ENCODE measurements at regions of chr22 and their contacts with region 1.

Region 1: DNA sequence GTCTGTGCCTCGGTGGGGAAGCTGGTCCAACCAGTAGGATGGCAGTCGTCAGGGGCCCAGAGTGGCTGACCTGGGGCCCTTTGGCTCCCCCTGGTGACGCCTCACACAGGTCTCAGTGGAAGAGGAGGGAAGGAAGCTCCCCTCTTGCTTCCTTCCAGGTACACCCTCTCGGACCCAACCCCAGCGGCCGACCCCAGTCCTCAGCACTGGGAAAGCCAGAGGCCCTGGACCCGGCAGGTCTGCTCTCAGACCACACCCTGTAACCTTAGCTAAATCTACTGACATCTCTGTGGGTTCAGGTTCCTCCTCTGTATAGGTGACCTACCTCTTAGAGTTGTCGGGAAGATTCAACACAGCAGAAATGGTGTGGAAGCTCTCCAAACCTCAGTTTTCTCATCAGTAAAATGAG is 3.4 kb upstream of the SCUBE1 start:
- DNase-seq: peak; percentile 56 to 87
- H3K4me3 ChIP-seq: no peak overlapping the region
- H3K27ac ChIP-seq: no peak overlapping the region
- H3K4me1 ChIP-seq: peaks cover 0 to 2% (median under 1%) of the 10 kb centered on the region in 4 experiments; a peak in 2 of 7 replicates
- H3K27me3 ChIP-seq: peaks cover 18 to 37% (median 33%) of the 10 kb centered on the region in 4 experiments
- CTCF ChIP-seq: peak; percentile 80 to 88 (median 87)
- EP300 ChIP-seq: no peak
- POLR2A ChIP-seq: no peak
- RAD21 ChIP-seq: peak; percentile 74 to 85

Region 2: DNA sequence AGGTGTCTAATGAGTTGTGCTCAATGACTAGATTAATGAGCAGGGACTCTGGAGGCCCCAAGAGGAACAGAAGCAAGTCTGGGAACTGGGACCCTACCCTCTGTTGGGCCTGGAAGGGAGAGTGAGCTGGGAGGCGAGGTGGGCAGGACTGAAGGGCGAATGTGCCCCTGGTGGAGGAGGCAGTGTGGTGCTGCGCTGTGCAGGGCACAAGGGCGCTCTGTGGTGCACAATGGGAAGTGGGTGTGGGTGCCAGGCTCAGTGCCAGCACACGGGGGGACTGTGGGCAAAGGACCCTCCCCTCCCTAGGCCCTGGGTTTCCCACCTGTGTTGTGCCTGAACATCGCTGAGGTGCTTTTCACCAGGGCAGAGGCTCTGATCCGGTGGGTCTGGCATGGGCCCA is 102.1 kb before region 1 on chr22:
- CTCF ChIA-PET with region 1: interaction called, 11 read pairs
- POLR2A ChIA-PET with region 1: no interaction called
- DNase-seq: no peak
- H3K4me3 ChIP-seq: no peak overlapping the region
- H3K27ac ChIP-seq: no peak overlapping the region
- H3K4me1 ChIP-seq: no peaks in the 10 kb centered on the region; a peak in 1 of 7 replicates
- H3K27me3 ChIP-seq: no peaks in the 10 kb centered on the region
- CTCF ChIP-seq: peak in 2 of 3 experiments; percentile 30 to 53; a peak in 2 of 4 replicates
- EP300 ChIP-seq: no peak
- POLR2A ChIP-seq: no peak
- RAD21 ChIP-seq: no peak

Region 3: GRCh38 chr22:43273902-43274484 is 72.5 kb before region 1 on chr22:
- CTCF ChIA-PET with region 1: interaction called, 335 read pairs
- POLR2A ChIA-PET with region 1: interaction called, 14 read pairs
- DNase-seq: peak; percentile 41 to 69
- H3K4me3 ChIP-seq: no peak overlapping the region
- H3K27ac ChIP-seq: no peak overlapping the region
- H3K4me1 ChIP-seq: peaks cover 3 to 20% (median 14%) of the 10 kb centered on the region in 4 experiments; a peak in 6 of 7 replicates
- H3K27me3 ChIP-seq: no peaks in the 10 kb centered on the region; a peak in 1 of 7 replicates
- CTCF ChIP-seq: peak; percentile 72 to 93 (median 86)
- EP300 ChIP-seq: no peak
- POLR2A ChIP-seq: no peak
- RAD21 ChIP-seq: peak; percentile 95 to 98

Region 4: GRCh38 chr22:43300891-43301676 is 45.4 kb before region 1 on chr22:
- CTCF ChIA-PET with region 1: interaction called, 18 read pairs
- POLR2A ChIA-PET with region 1: interaction called, 3 read pairs
- DNase-seq: no peak
- H3K4me3 ChIP-seq: no peak overlapping the region
- H3K27ac ChIP-seq: no peak overlapping the region
- H3K4me1 ChIP-seq: no peaks in the 10 kb centered on the region
- H3K27me3 ChIP-seq: no peaks in the 10 kb centered on the region
- CTCF ChIP-seq: no peak
- EP300 ChIP-seq: no peak
- POLR2A ChIP-seq: no peak
- RAD21 ChIP-seq: no peak

Region 5: DNA sequence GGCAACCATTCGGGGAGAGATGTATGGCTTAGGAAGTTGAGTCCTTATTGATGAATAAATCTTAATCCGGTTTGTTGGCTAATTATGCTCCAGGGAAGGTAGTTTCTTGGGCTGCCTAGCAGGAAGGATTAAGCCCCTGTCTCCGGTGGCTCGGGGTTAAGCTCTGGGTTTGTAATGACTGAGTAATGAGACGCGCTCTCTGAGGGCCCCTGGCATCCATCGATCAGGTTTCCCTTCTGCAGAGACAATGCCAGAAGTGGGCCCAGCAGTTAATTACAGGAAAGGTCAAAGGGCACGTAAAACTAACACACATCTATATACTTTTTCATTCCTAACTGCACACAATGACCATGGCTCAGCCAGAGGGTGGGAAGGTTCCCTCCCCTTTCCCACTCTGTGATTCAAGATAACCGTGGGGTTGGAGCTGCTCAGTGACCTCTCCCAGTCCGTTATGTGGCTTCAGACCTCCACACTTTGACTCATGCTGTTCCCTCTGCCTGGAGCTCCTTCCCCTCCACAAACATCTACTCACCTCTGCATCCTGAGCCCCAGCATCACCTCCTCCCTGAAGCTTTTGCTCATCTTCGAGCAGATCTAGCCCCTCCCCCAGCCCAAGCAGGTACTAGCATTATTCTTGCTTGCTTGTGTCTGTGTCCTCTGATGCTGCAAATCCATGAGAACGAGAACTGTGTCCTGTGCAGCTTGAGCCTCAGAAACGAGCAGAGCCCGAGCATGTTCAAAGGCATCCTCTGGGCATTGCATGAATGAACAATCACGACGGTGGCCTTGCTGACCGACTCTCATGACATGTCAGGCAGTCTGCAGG is 20.0 kb before region 1 on chr22:
- CTCF ChIA-PET with region 1: interaction called, 26 read pairs
- POLR2A ChIA-PET with region 1: interaction called, 4 read pairs
- DNase-seq: no peak
- H3K4me3 ChIP-seq: no peak overlapping the region
- H3K27ac ChIP-seq: no peak overlapping the region
- H3K4me1 ChIP-seq: peaks cover 0 to 8% (median 4%) of the 10 kb centered on the region in 4 experiments; a peak in 2 of 7 replicates
- H3K27me3 ChIP-seq: no peaks in the 10 kb centered on the region
- CTCF ChIP-seq: no peak
- EP300 ChIP-seq: no peak
- POLR2A ChIP-seq: no peak
- RAD21 ChIP-seq: no peak

Region 6: DNA sequence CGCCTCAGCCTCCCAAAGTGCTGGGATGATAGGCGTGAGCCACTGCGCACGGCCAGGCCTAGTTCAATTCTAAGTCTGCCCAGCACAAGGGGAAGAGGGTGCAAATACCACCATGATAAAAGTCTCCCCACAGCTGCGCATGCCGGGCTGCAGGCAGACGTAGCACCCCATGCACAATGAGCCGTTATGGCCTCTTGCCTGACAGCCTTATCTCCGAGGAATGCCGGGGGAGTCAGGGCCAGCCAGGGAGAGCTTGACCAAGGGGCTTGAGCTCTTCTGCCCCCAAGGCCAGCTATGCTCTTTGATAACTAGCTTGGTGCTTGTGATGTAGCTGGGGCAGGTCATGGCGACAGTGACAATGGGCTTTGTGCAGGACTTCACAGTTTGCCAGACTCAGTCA is 10.4 kb after region 1 on chr22:
- CTCF ChIA-PET with region 1: interaction called, 38 read pairs
- POLR2A ChIA-PET with region 1: interaction called, 3 read pairs
- DNase-seq: no peak
- H3K4me3 ChIP-seq: no peak overlapping the region
- H3K27ac ChIP-seq: no peak overlapping the region; the same call in 1 of the 2 replicates
- H3K4me1 ChIP-seq: no peaks in the 10 kb centered on the region; a peak in 1 of 7 replicates
- H3K27me3 ChIP-seq: no peaks in the 10 kb centered on the region
- CTCF ChIP-seq: no peak
- EP300 ChIP-seq: no peak
- POLR2A ChIP-seq: no peak
- RAD21 ChIP-seq: no peak

Region 7: GRCh38 chr22:43385770-43386641 is 39.5 kb after region 1 on chr22:
- CTCF ChIA-PET with region 1: interaction called, 27 read pairs
- POLR2A ChIA-PET with region 1: no interaction called
- DNase-seq: peak; percentile 53 to 90
- H3K4me3 ChIP-seq: no peak overlapping the region
- H3K27ac ChIP-seq: no peak overlapping the region
- H3K4me1 ChIP-seq: peaks cover 0 to 9% (median 2%) of the 10 kb centered on the region in 4 experiments; a peak in 3 of 7 replicates
- H3K27me3 ChIP-seq: peaks cover 0 to 12% (median 3%) of the 10 kb centered on the region in 4 experiments; a peak in 5 of 7 replicates
- CTCF ChIP-seq: peak; percentile 95 to 96 (median 96)
- EP300 ChIP-seq: no peak
- POLR2A ChIP-seq: no peak
- RAD21 ChIP-seq: peak; percentile 100

Region 8: GRCh38 chr22:43421046-43421665 is 74.6 kb after region 1 on chr22:
- CTCF ChIA-PET with region 1: no interaction called
- POLR2A ChIA-PET with region 1: no interaction called
- DNase-seq: no peak
- H3K4me3 ChIP-seq: no peak overlapping the region
- H3K27ac ChIP-seq: no peak overlapping the region
- H3K4me1 ChIP-seq: no peaks in the 10 kb centered on the region; a peak in 1 of 7 replicates
- H3K27me3 ChIP-seq: no peaks in the 10 kb centered on the region
- CTCF ChIP-seq: no peak
- EP300 ChIP-seq: no peak
- POLR2A ChIP-seq: no peak
- RAD21 ChIP-seq: no peak

Region 9: DNA sequence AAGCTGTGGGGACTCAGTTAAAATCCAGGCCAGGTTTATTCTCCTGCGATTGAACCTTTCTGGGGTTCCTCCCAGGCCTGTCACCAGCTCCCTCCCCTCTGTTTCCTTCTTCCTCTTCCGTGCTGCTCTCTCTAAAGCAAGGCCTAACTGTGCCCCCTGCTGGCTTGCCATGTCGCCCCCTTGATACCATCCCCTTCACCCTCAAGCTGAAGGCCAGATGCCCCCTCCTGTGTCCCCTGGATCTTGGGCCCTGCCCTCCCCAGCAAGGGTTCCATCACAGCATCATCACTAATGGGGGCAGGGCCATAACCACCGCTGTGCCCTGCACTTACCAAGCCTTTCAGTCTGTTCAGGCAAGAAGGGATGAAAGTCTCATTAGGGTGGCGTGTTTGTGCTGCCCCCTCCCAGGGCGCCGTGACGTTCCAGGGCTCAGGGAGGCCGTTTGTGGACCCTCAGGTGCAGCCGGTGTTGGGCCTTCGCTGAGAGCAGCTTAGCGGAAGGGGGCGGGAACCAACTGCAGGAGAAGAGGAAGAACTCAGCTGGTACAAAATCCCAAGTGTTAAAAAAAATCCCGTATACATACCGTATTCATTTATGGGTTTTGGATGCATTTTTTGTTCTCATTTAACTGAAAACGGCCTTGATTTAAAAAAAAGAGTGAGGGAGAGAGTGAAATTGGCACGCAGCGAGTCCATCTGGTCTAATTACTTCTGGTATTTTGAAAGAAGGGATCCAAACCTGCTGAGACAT is 135.2 kb after region 1 on chr22:
- CTCF ChIA-PET with region 1: no interaction called
- POLR2A ChIA-PET with region 1: no interaction called
- DNase-seq: no peak
- H3K4me3 ChIP-seq: no peak overlapping the region
- H3K27ac ChIP-seq: no peak overlapping the region
- H3K4me1 ChIP-seq: peaks cover 0 to 5% (median 1%) of the 10 kb centered on the region in 4 experiments; a peak in 2 of 7 replicates
- H3K27me3 ChIP-seq: no peaks in the 10 kb centered on the region
- CTCF ChIP-seq: peak; percentile 17 to 34 (median 29); a peak in 3 of 4 replicates
- EP300 ChIP-seq: no peak
- POLR2A ChIP-seq: no peak
- RAD21 ChIP-seq: peak; percentile 15 to 56; a peak in 3 of 4 replicates

Region 10: GRCh38 chr22:43658823-43659222 is 312.3 kb after region 1 on chr22:
- CTCF ChIA-PET with region 1: no interaction called
- POLR2A ChIA-PET with region 1: no interaction called
- DNase-seq: peak; percentile 19 to 56
- H3K4me3 ChIP-seq: no peak overlapping the region
- H3K27ac ChIP-seq: no peak overlapping the region
- H3K4me1 ChIP-seq: peaks cover 0 to 10% (median 8%) of the 10 kb centered on the region in 4 experiments; a peak in 6 of 7 replicates
- H3K27me3 ChIP-seq: no peaks in the 10 kb centered on the region
- CTCF ChIP-seq: no peak
- EP300 ChIP-seq: no peak
- POLR2A ChIP-seq: no peak
- RAD21 ChIP-seq: no peak

Measured in H1 (cell line).